ENCODE measurements at regions of chr19 and their contacts with region 1.

Region 1: GRCh38 chr19:36489118-36489919 is at the start of gene ZNF566:
- DNase-seq: peak; percentile 95
- H3K4me3 Mint-ChIP-seq: peak within 1 kb of the TSS; percentile 98
- H3K27ac Mint-ChIP-seq: peak within 1 kb of the TSS; percentile 96
- H3K4me1 Mint-ChIP-seq: peaks cover 15% of the 10 kb centered on the region
- H3K27me3 Mint-ChIP-seq: no peaks in the 10 kb centered on the region
- CTCF ChIP-seq: no peak
- total RNA-seq, gene ZNF566: 12.0 and 13.0 TPM in 2 replicates

Region 2: GRCh38 chr19:36363845-36364244 is 125.5 kb before region 1 on chr19:
- CTCF ChIA-PET with region 1: no interaction called
- intact Hi-C with region 1: no loop called
- DNase-seq: no peak
- H3K4me3 Mint-ChIP-seq: no peak overlapping the region
- H3K27ac Mint-ChIP-seq: no peak overlapping the region
- H3K4me1 Mint-ChIP-seq: no peaks in the 10 kb centered on the region
- H3K27me3 Mint-ChIP-seq: no peaks in the 10 kb centered on the region
- CTCF ChIP-seq: no peak

Region 3: DNA sequence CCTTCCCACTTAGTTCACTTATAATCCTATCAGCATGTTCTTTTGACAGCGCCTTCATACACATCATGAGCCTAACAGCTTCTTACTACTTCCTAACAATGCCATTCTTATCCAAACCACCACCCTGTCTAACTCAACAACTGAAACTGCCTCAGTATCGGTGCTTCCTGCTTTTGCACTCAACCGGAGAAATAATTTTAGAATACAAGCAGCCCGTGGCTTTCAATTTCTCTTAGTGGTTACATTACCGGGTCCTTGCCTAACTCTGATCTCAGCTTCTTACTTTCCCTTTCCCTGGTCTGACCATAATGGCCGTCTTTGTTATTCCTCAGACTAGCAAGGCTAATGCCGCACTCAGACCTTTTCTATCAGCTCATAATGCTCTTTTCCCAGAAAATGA is 87.8 kb before region 1 on chr19:
- CTCF ChIA-PET with region 1: no interaction called
- intact Hi-C with region 1: no loop called
- DNase-seq: no peak
- H3K4me3 Mint-ChIP-seq: no peak overlapping the region
- H3K27ac Mint-ChIP-seq: no peak overlapping the region
- H3K4me1 Mint-ChIP-seq: no peaks in the 10 kb centered on the region
- H3K27me3 Mint-ChIP-seq: no peaks in the 10 kb centered on the region
- CTCF ChIP-seq: no peak

Region 4: DNA sequence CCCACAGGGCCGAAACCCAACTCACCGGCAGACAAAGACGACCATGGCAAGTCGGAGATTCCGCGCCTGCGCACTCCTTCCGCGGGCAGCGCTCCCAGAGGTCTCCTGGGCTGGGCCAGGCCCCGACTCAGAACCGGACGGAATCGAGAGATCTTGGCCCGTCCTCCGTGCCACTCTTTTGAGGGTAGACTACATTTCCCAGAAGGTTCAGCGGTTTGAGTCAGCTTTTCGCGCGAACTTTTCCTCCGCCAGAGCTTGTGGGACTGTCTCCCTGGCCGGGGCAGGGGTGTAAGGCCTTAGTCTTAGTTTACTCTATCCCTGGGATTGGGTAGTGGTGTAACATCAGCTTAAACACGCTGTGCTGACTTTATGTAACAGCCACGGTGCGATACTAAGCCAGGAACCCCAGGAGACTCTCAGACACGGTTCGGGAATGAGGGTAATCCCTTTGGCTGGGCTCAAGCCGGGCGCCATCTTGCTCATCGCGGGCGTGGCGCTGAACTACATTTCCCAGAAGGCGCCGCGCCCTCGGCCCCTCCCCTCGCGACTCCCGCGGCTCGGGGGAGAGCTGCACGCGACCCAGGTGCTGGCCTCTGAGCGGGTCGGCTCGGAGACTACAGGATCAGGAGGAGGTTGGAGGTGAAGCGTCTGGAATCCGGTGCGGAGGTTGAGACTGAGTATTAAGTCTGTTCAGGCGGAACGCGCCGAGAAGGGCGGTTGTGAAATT is 39.0 kb after region 1 on chr19 and contains the start of gene ZNF260:
- CTCF ChIA-PET with region 1: no interaction called
- intact Hi-C with region 1: loop called (anchors 1 kb)
- DNase-seq: peak; percentile 95
- H3K4me3 Mint-ChIP-seq: peak within 1 kb of the TSS; percentile 100
- H3K27ac Mint-ChIP-seq: peak within 1 kb of the TSS; percentile 98
- H3K4me1 Mint-ChIP-seq: peaks cover 11% of the 10 kb centered on the region
- H3K27me3 Mint-ChIP-seq: no peaks in the 10 kb centered on the region
- CTCF ChIP-seq: no peak
- total RNA-seq, gene ZNF260: 14.1 and 17.8 TPM in 2 replicates

Region 5: GRCh38 chr19:36652958-36653357 is 163.6 kb after region 1 on chr19:
- CTCF ChIA-PET with region 1: no interaction called
- intact Hi-C with region 1: no loop called
- DNase-seq: no peak
- H3K4me3 Mint-ChIP-seq: no peak overlapping the region
- H3K27ac Mint-ChIP-seq: no peak overlapping the region
- H3K4me1 Mint-ChIP-seq: no peaks in the 10 kb centered on the region
- H3K27me3 Mint-ChIP-seq: no peaks in the 10 kb centered on the region
- CTCF ChIP-seq: no peak

Measured in Calu3 (cell line).